Calu3 (cell line): ENCODE measurements at regions of chr4 and their contacts with region 1.

Region 1: GRCh38 chr4:67327262-67328017 is 217.9 kb downstream of the CENPC start:
- DNase-seq: peak; percentile 49
- H3K4me3 Mint-ChIP-seq: no peak overlapping the region
- H3K27ac Mint-ChIP-seq: no peak overlapping the region
- H3K4me1 Mint-ChIP-seq: no peaks in the 10 kb centered on the region
- H3K27me3 Mint-ChIP-seq: no peaks in the 10 kb centered on the region
- CTCF ChIP-seq: peak; percentile 40

Region 2: GRCh38 chr4:66688674-66689073 is 638.8 kb before region 1 on chr4:
- CTCF ChIA-PET with region 1: no interaction called
- intact Hi-C with region 1: loop called (anchors 5 kb)
- DNase-seq: no peak
- H3K4me3 Mint-ChIP-seq: no peak overlapping the region
- H3K27ac Mint-ChIP-seq: no peak overlapping the region
- H3K4me1 Mint-ChIP-seq: no peaks in the 10 kb centered on the region
- H3K27me3 Mint-ChIP-seq: no peaks in the 10 kb centered on the region
- CTCF ChIP-seq: no peak

Region 3: GRCh38 chr4:67087897-67088296 is 239.5 kb before region 1 on chr4:
- CTCF ChIA-PET with region 1: interaction called, 3 read pairs
- intact Hi-C with region 1: loop called (anchors 1 kb)
- DNase-seq: peak; percentile 42
- H3K4me3 Mint-ChIP-seq: no peak overlapping the region
- H3K27ac Mint-ChIP-seq: no peak overlapping the region
- H3K4me1 Mint-ChIP-seq: no peaks in the 10 kb centered on the region
- H3K27me3 Mint-ChIP-seq: no peaks in the 10 kb centered on the region
- CTCF ChIP-seq: peak; percentile 14

Region 4: DNA sequence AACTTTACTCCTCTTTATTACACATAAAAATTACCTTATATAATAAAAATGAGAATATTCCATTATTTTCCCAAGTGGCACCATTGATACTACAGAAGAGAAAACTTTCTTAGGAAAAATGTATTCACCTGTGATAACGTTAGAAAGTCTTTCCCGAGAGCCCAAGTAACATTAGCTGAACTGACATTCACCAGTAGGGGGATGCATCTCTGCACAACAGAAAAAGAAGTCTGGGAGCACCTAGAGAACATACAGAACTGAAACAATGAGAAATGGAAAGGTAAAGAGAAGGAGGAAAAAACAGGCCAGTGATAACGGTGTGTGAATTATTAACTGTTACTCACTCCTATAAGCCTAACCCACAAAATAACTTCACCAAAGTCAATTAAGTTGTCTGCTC is 205.4 kb before region 1 on chr4:
- CTCF ChIA-PET with region 1: no interaction called
- intact Hi-C with region 1: loop called (anchors 10 kb)
- DNase-seq: peak; percentile 12
- H3K4me3 Mint-ChIP-seq: no peak overlapping the region
- H3K27ac Mint-ChIP-seq: no peak overlapping the region
- H3K4me1 Mint-ChIP-seq: no peaks in the 10 kb centered on the region
- H3K27me3 Mint-ChIP-seq: no peaks in the 10 kb centered on the region
- CTCF ChIP-seq: no peak